ENCODE measurements at regions of chr1 and their contacts with region 1.

Region 1: GRCh38 chr1:204640578-204640977 is 45.0 kb downstream of the LRRN2 start:
- DNase-seq: no peak
- H3K4me3 ChIP-seq: no peak overlapping the region
- H3K27ac ChIP-seq: no peak overlapping the region
- H3K4me1 ChIP-seq: no peaks in the 10 kb centered on the region
- H3K27me3 ChIP-seq: no peaks in the 10 kb centered on the region
- CTCF ChIP-seq: no peak
- POLR2A ChIP-seq: no peak

Region 2: DNA sequence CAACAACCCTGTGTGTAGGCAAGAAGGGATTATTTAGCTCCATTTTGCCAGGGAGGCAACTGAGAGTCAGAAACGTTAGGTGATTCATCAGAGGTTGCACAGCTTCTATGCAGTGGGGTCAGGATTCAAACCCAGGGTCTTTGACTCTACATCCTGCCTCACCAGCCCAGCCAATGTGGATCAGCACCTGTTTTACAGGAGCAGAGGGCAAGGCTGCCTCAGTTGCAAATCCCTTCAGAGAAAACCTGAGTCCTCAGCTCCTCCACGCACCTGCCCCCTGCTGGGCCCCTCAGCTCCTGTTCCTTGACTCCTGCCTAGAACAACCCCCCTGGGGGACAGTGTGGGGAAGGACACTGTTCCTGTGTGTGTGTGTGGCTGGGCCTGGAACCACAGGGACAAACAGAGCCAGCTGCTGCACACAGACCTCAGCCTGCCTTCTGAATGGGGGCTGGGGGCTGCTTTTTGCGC is 16.6 kb before region 1 on chr1:
- intact Hi-C with region 1: loop called (anchors 1 kb)
- DNase-seq: no peak
- H3K4me3 ChIP-seq: no peak overlapping the region
- H3K27ac ChIP-seq: no peak overlapping the region
- H3K4me1 ChIP-seq: no peaks in the 10 kb centered on the region
- H3K27me3 ChIP-seq: no peaks in the 10 kb centered on the region
- CTCF ChIP-seq: no peak
- POLR2A ChIP-seq: no peak